ENCODE measurements at regions of chr3 and their contacts with region 1.

Region 1: GRCh38 chr3:141875374-141875892 is 1.0 kb upstream of the ATP1B3 start:
- DNase-seq: peak; percentile 95
- H3K4me3 Mint-ChIP-seq: peak overlapping the region; percentile 98
- H3K27ac Mint-ChIP-seq: peak overlapping the region; percentile 97
- H3K4me1 Mint-ChIP-seq: peaks cover 29% of the 10 kb centered on the region
- H3K27me3 Mint-ChIP-seq: peaks cover 2% of the 10 kb centered on the region

Region 2: GRCh38 chr3:141311496-141312353 is 563.7 kb before region 1 on chr3:
- intact Hi-C with region 1: loop called (anchors 10 kb)
- DNase-seq: peak; percentile 99
- H3K4me3 Mint-ChIP-seq: peak overlapping the region; percentile 95
- H3K27ac Mint-ChIP-seq: peak overlapping the region; percentile 96
- H3K4me1 Mint-ChIP-seq: peaks cover 55% of the 10 kb centered on the region
- H3K27me3 Mint-ChIP-seq: no peaks in the 10 kb centered on the region

Region 3: GRCh38 chr3:141487521-141488252 is 387.7 kb before region 1 on chr3:
- intact Hi-C with region 1: loop called (anchors 5 kb)
- DNase-seq: peak; percentile 96
- H3K4me3 Mint-ChIP-seq: peak overlapping the region; percentile 92
- H3K27ac Mint-ChIP-seq: peak overlapping the region; percentile 92
- H3K4me1 Mint-ChIP-seq: peaks cover 58% of the 10 kb centered on the region
- H3K27me3 Mint-ChIP-seq: peaks cover 2% of the 10 kb centered on the region

Region 4: GRCh38 chr3:141887051-141887450 is 11.6 kb after region 1 on chr3:
- intact Hi-C with region 1: loop called (anchors 1 kb)
- DNase-seq: no peak
- H3K4me3 Mint-ChIP-seq: no peak overlapping the region
- H3K27ac Mint-ChIP-seq: no peak overlapping the region
- H3K4me1 Mint-ChIP-seq: peaks cover 50% of the 10 kb centered on the region
- H3K27me3 Mint-ChIP-seq: no peaks in the 10 kb centered on the region

Region 5: DNA sequence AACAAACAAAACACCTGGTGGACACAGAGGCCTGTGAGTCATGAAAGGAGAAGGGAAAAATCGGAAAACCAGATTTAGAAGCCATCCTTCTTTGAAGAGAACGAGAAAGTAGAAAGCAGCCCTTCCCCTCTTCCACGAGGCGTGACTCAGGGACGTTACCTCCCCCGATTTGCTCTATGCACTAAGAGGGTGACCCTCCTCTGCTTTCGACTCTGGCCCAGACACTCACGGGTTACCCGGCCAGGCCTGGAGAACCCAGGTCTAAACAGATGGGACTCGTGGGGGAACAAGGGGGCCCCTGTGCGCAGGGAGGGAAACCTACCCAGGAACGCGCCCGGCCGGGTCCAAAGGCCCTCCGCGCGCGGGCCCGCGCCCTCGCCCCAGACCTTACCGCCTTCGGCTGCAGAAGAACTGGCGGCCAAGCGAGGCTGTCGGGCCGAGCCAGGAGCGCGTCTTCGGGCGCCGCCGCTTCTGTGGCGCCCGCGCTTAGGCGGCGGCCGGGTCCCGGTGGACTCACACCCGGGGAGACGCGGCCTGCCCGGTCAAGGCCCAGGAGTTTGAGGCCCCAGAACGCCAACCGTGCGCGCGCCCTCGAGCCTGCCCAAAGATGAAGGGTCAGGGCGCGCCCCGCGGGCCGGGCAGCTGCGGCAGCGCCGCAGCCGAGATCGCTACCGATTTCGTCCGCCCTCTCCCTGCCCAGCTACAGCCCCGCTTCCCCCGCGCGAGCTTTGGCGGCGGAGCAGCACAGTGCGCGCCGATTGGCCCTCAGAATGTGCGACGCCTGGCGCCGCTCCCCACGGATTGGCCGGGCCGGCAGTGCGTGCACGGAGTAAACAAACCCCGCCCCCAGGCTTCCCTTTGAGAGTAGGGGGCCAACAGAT is 273.6 kb after region 1 on chr3 and contains the start of gene TFDP2:
- intact Hi-C with region 1: loop called (anchors 5 kb)
- DNase-seq: peak; percentile 97
- H3K4me3 Mint-ChIP-seq: peak within 1 kb of the TSS; percentile 83
- H3K27ac Mint-ChIP-seq: peak within 1 kb of the TSS; percentile 73
- H3K4me1 Mint-ChIP-seq: peaks cover 16% of the 10 kb centered on the region
- H3K27me3 Mint-ChIP-seq: peaks cover 4% of the 10 kb centered on the region
- total RNA-seq, gene TFDP2: 22.0 and 22.1 TPM in 2 replicates